ENCODE measurements at regions of chr10 and their contacts with region 1.

Region 1: GRCh38 chr10:112721080-112721698 is 228.9 kb upstream of the TCF7L2 start:
- DNase-seq: no peak
- ATAC-seq: peak; percentile 71

Region 2: DNA sequence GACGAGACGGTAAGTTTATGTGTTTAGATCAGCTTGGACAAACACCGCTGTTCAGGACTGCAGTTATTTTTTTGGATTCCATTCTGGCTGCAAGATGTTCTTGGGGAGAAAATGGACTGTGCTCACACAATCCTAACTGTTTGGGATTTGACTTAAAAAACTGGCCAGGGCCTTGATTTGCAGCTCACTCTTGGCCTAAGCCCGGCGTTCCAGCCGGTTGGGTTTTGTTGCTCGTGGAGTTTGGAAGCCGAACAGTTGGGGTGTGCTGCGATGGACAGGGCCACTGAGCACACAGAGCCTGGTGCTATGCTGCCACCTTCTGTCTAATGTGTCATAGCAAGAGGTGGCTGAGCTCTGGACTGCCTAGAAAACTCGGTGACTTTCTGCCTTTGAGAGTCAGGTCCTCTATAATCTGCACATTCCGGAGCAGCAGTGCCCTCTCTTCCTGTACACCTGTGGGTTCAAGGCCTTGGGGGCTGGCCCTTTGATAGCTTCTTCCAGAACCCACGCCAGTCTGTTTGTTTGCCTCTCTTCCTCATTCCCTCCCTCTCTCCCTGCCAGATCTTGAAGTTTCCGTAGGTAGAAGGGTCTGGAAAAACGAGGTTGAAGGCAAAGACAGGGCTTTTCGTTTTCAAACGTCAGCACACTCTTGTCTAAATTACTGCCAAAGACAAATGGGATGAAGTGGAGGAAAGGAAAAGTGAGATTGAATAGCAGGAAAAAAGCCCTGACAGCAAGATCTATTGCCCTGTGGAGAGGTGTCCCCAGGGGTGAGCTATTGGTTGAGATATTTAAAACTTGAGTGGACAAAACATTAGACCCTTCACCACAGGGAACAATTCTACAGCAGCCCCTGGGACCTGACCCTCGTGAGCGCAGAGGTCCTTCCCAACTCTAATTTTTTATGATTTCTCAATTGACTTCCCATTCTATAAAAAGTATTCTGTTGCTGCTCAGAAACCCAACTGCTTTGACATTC is 664.1 kb after region 1 on chr10:
- intact Hi-C with region 1: loop called in 1 of 2 experiments (anchors 10 kb)
- DNase-seq: peak; percentile 74 to 80
- ATAC-seq: peak; percentile 100

Measured in left colon (tissue), 2 donors.